ENCODE measurements at regions of chr10 and their contacts with region 1.

Region 1: DNA sequence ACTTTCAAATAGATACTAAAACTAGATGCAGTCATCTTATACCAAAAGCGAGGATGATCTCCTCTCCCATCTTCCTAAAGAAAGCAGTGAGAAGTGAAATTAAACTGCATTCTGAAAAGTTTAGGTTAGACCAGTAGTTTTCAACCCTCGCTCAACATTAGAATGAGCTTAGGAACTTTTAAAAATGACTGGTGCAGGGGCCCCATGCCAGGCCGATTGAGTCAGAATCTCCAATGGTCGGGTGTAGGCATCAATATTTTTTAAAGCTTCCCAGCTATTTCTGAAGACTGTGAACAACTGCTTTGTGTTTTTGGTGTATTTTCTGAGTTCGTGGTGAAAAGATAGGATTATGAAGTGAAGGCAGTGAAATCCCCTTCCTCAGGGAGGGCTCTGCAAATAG is 146.0 kb downstream of the VTI1A start:
- DNase-seq: no peak
- ATAC-seq: no peak
- H3K4me3 ChIP-seq: no peak overlapping the region
- H3K27ac ChIP-seq: no peak overlapping the region
- H3K4me1 ChIP-seq: no peaks in the 10 kb centered on the region
- H3K27me3 ChIP-seq: no peaks in the 10 kb centered on the region
- CTCF ChIP-seq: no peak

Region 2: GRCh38 chr10:112792487-112793201 is 199.6 kb after region 1 on chr10:
- CTCF ChIA-PET with region 1: no interaction called
- POLR2A ChIA-PET with region 1: interaction called, 13 read pairs
- in situ Hi-C with region 1: no loop called
- intact Hi-C with region 1: no loop called
- DNase-seq: no peak
- ATAC-seq: peak; percentile 80
- H3K4me3 ChIP-seq: peak overlapping the region in 1 of 2 experiments; percentile 9; a peak in 1 of 4 replicates
- H3K27ac ChIP-seq: peak overlapping the region; percentile 75
- H3K4me1 ChIP-seq: peaks cover 28% of the 10 kb centered on the region
- H3K27me3 ChIP-seq: no peaks in the 10 kb centered on the region
- CTCF ChIP-seq: no peak

Region 3: DNA sequence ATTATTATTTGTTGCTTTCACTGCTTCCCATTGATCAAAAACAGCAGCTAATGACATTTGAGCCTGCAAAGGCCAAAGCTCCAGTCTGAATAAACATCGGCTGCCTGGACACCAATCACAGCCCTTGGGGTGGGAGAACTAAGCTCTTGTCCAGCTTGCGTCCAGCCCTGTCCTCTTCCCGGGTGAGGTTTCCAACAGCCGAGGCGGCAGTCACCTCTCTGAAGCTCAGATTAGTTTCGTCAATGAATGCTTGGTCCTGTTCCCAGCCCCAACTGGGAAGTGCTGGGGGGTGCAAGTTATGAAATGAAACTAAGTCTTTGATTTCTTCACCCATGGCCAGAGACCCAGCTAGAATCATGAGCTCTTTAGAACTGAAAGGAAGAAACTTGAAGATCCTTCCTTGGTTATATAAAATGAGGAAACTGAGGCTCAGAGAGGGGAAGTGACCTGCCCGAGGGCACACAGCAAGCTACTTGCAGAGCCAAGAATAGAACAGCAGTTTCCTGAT is 243.0 kb after region 1 on chr10:
- CTCF ChIA-PET with region 1: no interaction called
- POLR2A ChIA-PET with region 1: interaction called, 10 read pairs
- in situ Hi-C with region 1: no loop called
- intact Hi-C with region 1: no loop called
- DNase-seq: no peak
- ATAC-seq: no peak
- H3K4me3 ChIP-seq: no peak overlapping the region
- H3K27ac ChIP-seq: no peak overlapping the region
- H3K4me1 ChIP-seq: no peaks in the 10 kb centered on the region; the same call in 1 of the 2 replicates
- H3K27me3 ChIP-seq: no peaks in the 10 kb centered on the region
- CTCF ChIP-seq: no peak